Activated CD4-positive, alpha-beta T cell treated with anti-CD3 and anti-CD28 coated beads, Interleukin-2, amount 10 ng/mL, durations not matched to agents 7 days and 5 days (primary cell): ENCODE measurements at regions of chr22 and their contacts with region 1.

Region 1: GRCh38 chr22:39395936-39396796 is 3.4 kb upstream of the TAB1 start:
- DNase-seq: no peak
- H3K4me3 Mint-ChIP-seq: no peak overlapping the region
- H3K27ac Mint-ChIP-seq: no peak overlapping the region
- H3K4me1 Mint-ChIP-seq: peaks cover 16% of the 10 kb centered on the region
- H3K27me3 Mint-ChIP-seq: no peaks in the 10 kb centered on the region

Region 2: DNA sequence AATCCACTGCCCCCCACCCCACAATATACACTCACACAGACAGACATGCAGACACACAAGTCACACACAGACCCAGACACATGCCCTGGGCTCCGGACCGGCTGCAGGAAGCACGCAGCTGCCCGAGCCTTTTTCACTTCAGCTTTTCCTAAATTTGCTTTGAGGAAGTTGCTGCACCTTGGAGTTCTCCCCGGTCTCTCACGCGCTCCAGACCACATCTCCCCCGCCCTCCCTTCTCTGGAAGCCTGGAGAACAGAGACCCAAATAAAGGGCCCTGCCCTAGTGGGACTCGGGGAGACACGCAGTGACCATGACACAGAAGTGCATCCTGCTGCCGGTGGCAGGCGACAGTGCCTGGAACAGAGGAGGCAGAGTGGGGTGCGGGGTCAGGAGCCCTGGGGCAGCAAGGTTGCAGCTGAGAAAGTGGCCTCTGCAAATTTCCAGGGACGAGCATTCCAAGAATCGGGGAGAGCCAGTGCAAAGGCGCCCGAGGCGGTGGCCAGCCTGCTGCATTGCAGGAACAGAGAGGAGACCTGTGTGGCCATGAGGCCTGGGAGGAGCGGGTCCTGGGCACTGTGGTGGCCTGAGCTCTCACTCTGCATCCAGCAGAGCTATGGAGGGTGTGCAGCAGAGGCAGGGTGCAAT is 95.9 kb before region 1 on chr22:
- CTCF ChIA-PET with region 1: no interaction called
- POLR2A ChIA-PET with region 1: no interaction called
- DNase-seq: no peak
- H3K4me3 Mint-ChIP-seq: no peak overlapping the region
- H3K27ac Mint-ChIP-seq: no peak overlapping the region
- H3K4me1 Mint-ChIP-seq: peaks cover 9% of the 10 kb centered on the region
- H3K27me3 Mint-ChIP-seq: peaks cover 26% of the 10 kb centered on the region

Region 3: DNA sequence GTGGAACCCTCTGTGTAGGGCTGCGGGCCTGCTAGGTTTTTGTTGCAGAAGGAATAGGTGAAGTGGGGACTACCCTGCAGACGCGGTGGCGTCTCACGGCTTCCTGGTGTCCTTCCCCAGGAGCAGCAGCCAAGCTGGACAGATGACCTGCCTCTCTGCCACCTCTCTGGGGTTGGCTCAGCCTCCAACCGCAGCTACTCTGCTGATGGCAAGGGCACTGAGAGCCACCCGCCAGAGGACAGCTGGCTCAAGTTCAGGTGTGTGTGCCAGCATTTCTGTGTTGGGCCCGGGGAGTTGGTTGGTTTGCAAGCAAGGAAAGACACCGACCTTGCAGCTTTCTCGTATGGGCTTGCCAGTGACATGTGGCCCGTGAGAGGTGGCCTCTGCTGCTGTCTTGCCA is 18.7 kb after region 1 on chr22:
- CTCF ChIA-PET with region 1: interaction called, 24 read pairs
- POLR2A ChIA-PET with region 1: no interaction called
- DNase-seq: no peak
- H3K4me3 Mint-ChIP-seq: no peak overlapping the region
- H3K27ac Mint-ChIP-seq: peak overlapping the region; percentile 92
- H3K4me1 Mint-ChIP-seq: peaks cover 58% of the 10 kb centered on the region
- H3K27me3 Mint-ChIP-seq: no peaks in the 10 kb centered on the region